ENCODE measurements at regions of chr13 and their contacts with region 1.

Region 1: DNA sequence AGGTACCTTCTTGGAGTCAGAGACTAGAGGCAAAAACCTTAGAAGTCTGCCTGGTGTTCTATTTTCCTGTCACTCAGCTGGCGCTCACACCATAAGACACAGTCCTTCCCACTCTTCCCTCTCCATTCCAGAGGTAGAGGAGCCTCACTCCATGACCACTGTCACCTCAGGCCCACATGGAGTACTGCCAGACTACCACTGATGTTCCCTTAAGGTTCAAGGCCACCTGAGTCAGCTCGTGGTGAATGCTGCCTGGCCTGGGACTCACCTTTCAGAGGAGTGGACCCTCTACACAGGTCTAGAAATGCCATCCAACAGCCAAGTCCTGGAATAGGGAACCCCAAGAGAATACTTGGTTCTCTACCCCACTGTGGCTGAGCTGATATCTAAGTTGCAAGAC is 29.9 kb downstream of the RGCC start:
- DNase-seq: no peak
- H3K4me3 ChIP-seq: no peak overlapping the region
- H3K27ac ChIP-seq: no peak overlapping the region
- H3K4me1 ChIP-seq: no peaks in the 10 kb centered on the region
- H3K27me3 ChIP-seq: no peaks in the 10 kb centered on the region
- CTCF ChIP-seq: no peak

Region 2: DNA sequence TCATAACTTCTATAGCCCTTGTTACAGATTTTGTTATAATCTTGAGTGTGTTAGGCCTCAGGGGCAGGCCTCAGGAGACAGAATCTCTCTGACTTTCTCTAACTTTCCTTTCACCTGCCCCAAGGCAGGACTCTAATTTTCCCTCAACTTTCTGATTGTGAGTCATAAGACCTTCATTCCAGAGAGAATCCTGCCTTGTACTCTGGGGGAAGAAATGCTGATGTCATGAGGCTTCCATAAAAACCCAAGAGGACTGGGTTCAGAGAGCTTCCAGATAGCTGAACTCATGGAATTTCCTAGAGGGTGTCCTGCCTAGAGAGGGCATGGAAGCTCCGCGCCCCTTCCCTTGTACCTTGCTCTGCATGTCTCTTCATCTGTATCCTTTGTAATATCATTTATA is 349.3 kb before region 1 on chr13:
- CTCF ChIA-PET with region 1: no interaction called
- POLR2A ChIA-PET with region 1: no interaction called
- intact Hi-C with region 1: no loop called
- DNase-seq: no peak
- H3K4me3 ChIP-seq: no peak overlapping the region
- H3K27ac ChIP-seq: no peak overlapping the region
- H3K4me1 ChIP-seq: peaks cover 8% of the 10 kb centered on the region; the same call in 1 of the 2 replicates
- H3K27me3 ChIP-seq: no peaks in the 10 kb centered on the region
- CTCF ChIP-seq: no peak

Region 3: DNA sequence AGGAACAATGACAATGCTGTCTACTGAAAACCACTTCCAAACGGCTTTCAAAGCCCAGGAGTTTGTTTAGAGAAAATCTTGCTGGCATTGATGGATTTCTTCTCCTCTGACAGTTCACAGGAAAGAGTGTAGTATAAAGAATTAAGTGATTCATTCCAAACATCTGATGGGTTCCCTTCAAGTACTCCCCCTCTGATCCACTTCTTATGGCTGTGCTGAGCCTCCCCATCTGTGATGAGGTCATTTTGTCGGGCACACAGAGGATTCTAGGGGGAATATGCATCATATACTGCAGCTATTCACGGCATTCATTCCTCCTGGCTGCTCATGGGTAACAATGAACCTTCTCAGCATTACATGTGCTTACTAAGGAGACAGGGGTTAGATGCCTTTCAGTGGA is 78.0 kb after region 1 on chr13:
- CTCF ChIA-PET with region 1: no interaction called
- POLR2A ChIA-PET with region 1: interaction called, 25 read pairs
- intact Hi-C with region 1: no loop called
- DNase-seq: no peak
- H3K4me3 ChIP-seq: no peak overlapping the region
- H3K27ac ChIP-seq: no peak overlapping the region
- H3K4me1 ChIP-seq: no peaks in the 10 kb centered on the region
- H3K27me3 ChIP-seq: no peaks in the 10 kb centered on the region
- CTCF ChIP-seq: no peak

Measured in PC-9 (cell line).